Calu3 (cell line): ENCODE measurements at regions of chr15 and their contacts with region 1.

Region 1: DNA sequence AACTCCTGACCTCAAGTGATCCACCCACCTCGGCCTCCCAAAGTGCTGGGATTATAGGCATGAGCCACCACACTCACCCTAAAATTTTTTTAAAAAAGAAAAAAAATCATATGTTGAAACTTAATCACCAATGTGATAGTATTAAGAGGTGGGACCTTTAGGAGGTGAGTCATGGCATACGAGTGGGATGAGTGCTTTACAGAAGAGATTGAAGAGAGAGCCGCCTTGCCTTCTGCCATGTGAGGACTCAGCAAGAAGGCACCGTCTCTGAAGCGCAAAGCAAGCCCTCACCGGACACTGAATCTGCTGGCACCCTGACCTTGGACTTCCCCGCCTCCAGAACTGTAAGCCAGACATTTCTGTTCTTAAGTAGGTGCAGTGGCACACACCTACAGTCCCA is 5.5 kb downstream of the ARPIN start:
- DNase-seq: no peak
- H3K4me3 Mint-ChIP-seq: no peak overlapping the region
- H3K27ac Mint-ChIP-seq: no peak overlapping the region
- H3K4me1 Mint-ChIP-seq: peaks cover 14% of the 10 kb centered on the region
- H3K27me3 Mint-ChIP-seq: no peaks in the 10 kb centered on the region
- CTCF ChIP-seq: no peak

Region 2: GRCh38 chr15:89947385-89947784 is 40.1 kb after region 1 on chr15:
- CTCF ChIA-PET with region 1: interaction called, 11 read pairs
- intact Hi-C with region 1: no loop called
- DNase-seq: no peak
- H3K4me3 Mint-ChIP-seq: no peak overlapping the region
- H3K27ac Mint-ChIP-seq: no peak overlapping the region
- H3K4me1 Mint-ChIP-seq: peaks cover 7% of the 10 kb centered on the region
- H3K27me3 Mint-ChIP-seq: no peaks in the 10 kb centered on the region
- CTCF ChIP-seq: no peak